ENCODE measurements at regions of chr5 and their contacts with region 1.

Region 1: GRCh38 chr5:109409844-109410388 is at the start of gene PJA2:
- DNase-seq: peak; percentile 89 to 99 (median 96)
- ATAC-seq: peak; percentile 76
- H3K4me3 ChIP-seq: peak within 1 kb of the TSS; percentile 73 to 88
- H3K4me3 Mint-ChIP-seq: peak within 1 kb of the TSS; percentile 98
- H3K27ac ChIP-seq: peak within 1 kb of the TSS; percentile 90 to 98
- H3K27ac Mint-ChIP-seq: peak within 1 kb of the TSS; percentile 97
- H3K4me1 ChIP-seq: peaks cover 19% of the 10 kb centered on the region
- H3K4me1 Mint-ChIP-seq: peaks cover 47% of the 10 kb centered on the region
- H3K27me3 ChIP-seq: no peaks in the 10 kb centered on the region
- H3K27me3 Mint-ChIP-seq: no peaks in the 10 kb centered on the region
- CTCF ChIP-seq: peak; percentile 39
- total RNA-seq, gene PJA2: 89.3 to 94.4 TPM

Region 2: DNA sequence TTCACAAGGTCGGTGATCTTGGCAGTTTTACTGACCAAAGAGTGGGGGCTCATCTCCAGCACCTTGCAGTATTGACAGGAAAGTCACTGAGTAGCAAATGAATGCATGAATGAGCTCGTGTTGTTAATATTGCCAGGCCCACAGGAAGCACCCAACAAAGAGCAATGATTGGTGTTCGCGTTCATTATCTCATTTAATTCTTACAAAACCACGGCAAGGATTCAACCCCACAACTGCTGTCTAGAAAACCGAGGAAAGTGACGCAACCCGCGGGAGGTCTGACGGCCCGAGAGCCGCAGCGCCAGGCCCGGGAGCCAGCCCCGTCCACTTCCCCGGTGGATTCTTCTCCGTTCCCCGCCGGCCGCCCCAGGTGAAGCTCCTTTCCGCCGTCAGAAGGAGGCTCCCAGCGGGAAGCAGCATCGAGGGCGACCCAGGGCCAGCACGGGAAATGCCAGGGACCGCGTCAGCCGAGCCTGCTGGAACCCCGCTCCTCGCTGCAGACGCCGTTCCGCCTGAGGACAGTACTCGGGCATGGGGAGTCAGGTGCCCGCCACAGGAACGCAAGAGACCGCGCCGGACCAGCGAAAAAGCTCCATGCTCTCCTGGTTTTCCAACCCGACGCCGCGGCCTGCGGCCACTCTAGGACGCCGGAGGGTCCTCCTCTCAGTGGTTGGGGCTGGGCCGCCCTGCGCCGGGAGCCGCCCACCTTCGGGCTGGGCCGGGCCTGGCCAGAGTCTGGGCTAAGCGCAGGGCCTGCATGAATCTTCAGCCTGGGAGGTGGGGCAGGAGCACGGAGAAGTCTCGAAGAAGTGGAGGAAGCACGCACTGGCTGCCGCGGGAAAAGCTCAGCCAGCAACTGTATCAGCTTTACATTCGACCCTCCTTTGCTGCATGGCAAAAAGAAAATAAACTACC is 682.0 kb before region 1 on chr5:
- CTCF ChIA-PET with region 1: no interaction called
- POLR2A ChIA-PET with region 1: interaction called, 5 read pairs
- intact Hi-C with region 1: loop called in 1 of 2 experiments (anchors 5 kb)
- DNase-seq: peak in 8 of 9 experiments; percentile 21 to 70 (median 46)
- ATAC-seq: peak; percentile 70
- H3K4me3 ChIP-seq: peak overlapping the region; percentile 85 to 87
- H3K4me3 Mint-ChIP-seq: peak overlapping the region; percentile 90
- H3K27ac ChIP-seq: peak overlapping the region; percentile 52 to 60
- H3K27ac Mint-ChIP-seq: peak overlapping the region; percentile 56
- H3K4me1 ChIP-seq: peaks cover 6% of the 10 kb centered on the region
- H3K4me1 Mint-ChIP-seq: peaks cover 24% of the 10 kb centered on the region
- H3K27me3 ChIP-seq: peaks cover 0 to 3% of the 10 kb centered on the region in 2 experiments
- H3K27me3 Mint-ChIP-seq: peaks cover 21% of the 10 kb centered on the region
- CTCF ChIP-seq: no peak

Region 3: DNA sequence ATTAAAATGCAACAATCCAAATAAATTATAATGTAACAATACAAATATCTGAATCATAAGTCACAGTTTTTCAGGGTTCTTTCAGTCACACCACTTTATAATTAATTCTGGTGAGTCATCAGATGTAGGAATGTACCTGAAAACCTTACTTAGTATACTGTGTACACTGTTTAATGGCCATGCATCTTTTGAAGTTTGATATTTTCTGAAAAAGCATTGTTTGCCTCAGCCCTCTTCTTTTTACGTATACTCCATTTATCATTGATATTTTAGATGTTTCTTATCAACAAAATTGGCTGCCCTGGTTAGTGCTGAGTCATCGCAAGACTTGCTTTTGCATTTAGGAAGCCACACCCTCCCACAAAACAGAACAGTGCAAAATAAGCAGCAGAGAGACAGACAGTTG is 218.8 kb before region 1 on chr5:
- CTCF ChIA-PET with region 1: no interaction called
- POLR2A ChIA-PET with region 1: no interaction called
- intact Hi-C with region 1: no loop called
- DNase-seq: no peak
- ATAC-seq: no peak
- H3K4me3 ChIP-seq: no peak overlapping the region
- H3K4me3 Mint-ChIP-seq: no peak overlapping the region
- H3K27ac ChIP-seq: no peak overlapping the region
- H3K27ac Mint-ChIP-seq: no peak overlapping the region
- H3K4me1 ChIP-seq: no peaks in the 10 kb centered on the region
- H3K4me1 Mint-ChIP-seq: peaks cover 2% of the 10 kb centered on the region
- H3K27me3 ChIP-seq: no peaks in the 10 kb centered on the region
- H3K27me3 Mint-ChIP-seq: no peaks in the 10 kb centered on the region
- CTCF ChIP-seq: no peak

Region 4: DNA sequence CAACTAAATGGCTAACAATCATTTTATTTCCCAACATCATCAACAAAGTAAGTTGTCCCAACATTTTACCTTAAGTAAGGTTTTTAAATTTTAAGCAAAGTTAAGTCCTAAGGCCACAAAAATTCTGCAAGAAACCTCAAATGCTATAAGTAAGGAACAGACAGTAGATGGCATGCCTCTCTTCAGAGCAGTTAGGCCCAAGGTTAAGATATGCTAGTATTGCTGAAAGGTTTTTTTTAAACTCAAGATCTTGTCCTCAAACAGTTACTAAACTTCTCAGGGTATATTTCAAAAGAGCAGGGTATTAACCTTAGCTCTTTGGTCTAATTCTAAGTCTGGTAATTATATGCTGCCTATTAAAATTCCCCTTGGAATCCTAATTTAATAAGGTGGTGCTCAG is 35.3 kb before region 1 on chr5:
- CTCF ChIA-PET with region 1: interaction called, 3 read pairs
- POLR2A ChIA-PET with region 1: interaction called, 11 read pairs
- intact Hi-C with region 1: loop called (anchors 5 kb)
- DNase-seq: peak in 2 of 9 experiments; percentile 26 to 46
- ATAC-seq: peak; percentile 44
- H3K4me3 ChIP-seq: no peak overlapping the region
- H3K4me3 Mint-ChIP-seq: no peak overlapping the region
- H3K27ac ChIP-seq: no peak overlapping the region
- H3K27ac Mint-ChIP-seq: no peak overlapping the region
- H3K4me1 ChIP-seq: peaks cover 6% of the 10 kb centered on the region
- H3K4me1 Mint-ChIP-seq: peaks cover 69% of the 10 kb centered on the region
- H3K27me3 ChIP-seq: no peaks in the 10 kb centered on the region
- H3K27me3 Mint-ChIP-seq: no peaks in the 10 kb centered on the region
- CTCF ChIP-seq: no peak

Region 5: DNA sequence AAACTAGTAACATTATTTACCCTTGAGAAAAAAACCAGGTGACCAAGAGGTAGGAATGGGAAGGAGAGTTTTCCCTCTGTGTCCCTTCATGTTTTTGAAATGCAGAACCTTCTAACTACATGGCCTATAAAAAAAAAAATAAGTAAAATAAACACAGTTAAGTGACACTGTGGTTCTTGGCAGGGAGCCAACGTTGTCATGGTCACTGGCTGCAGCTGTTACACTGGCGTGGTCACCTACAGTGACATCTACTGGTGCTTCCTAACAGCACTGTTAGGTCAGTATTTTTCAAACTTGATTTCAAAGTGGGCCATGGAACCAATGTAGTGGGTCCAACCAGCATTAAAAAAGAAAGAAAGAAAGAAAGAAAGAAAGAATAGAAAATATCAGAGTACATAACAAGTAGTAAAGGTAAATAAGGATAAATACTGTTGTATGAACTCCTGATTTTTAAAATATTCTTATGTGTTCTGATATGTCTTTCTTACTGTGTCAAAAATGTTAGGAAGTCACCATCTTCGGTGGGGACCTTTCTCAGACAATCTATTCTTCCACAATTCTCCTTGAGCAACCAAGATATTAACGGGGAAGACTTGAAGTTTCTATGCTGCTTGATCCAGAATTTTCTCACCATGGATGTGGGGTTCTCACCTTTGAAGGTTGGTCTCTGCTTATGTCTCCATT is 59.0 kb after region 1 on chr5:
- CTCF ChIA-PET with region 1: no interaction called
- POLR2A ChIA-PET with region 1: no interaction called
- intact Hi-C with region 1: loop called in 1 of 2 experiments (anchors 2 kb)
- DNase-seq: peak; percentile 39 to 89 (median 75)
- ATAC-seq: peak; percentile 52
- H3K4me3 ChIP-seq: no peak overlapping the region
- H3K4me3 Mint-ChIP-seq: no peak overlapping the region
- H3K27ac ChIP-seq: no peak overlapping the region
- H3K27ac Mint-ChIP-seq: no peak overlapping the region
- H3K4me1 ChIP-seq: no peaks in the 10 kb centered on the region
- H3K4me1 Mint-ChIP-seq: peaks cover 5% of the 10 kb centered on the region
- H3K27me3 ChIP-seq: no peaks in the 10 kb centered on the region
- H3K27me3 Mint-ChIP-seq: no peaks in the 10 kb centered on the region
- CTCF ChIP-seq: no peak

Region 6: DNA sequence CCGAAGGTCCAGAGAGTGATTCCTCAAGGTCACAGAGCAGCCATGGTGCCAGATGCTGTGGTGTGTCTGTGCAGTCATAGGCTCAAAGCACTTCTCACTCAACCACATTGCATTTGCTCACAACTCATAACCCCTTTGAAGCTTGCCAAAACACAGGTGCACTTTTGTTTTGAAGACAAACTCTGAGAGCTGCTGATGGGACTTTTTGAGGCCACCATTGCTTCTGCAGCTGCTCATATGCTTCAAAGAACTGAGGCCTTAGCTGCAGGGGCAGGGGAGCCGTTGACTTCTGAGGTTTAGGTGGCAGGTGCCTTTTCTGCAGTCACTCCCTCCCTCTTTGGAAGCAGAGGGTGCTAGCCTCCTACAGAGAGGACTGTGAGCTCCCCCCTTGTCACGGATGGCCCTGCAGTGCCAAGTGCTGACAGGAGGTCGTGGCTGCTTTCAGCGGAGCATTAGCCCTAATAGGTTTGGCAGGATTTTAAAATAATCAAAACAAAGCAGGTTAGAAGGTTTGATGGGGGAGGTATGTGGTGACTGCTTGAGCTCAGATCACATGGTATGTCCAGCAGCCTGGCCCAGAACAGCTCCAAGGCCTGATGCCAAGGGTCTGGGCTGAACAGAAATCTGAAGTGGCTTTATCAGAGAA is 511.9 kb after region 1 on chr5:
- CTCF ChIA-PET with region 1: no interaction called
- POLR2A ChIA-PET with region 1: interaction called, 6 read pairs
- intact Hi-C with region 1: loop called in 1 of 2 experiments (anchors 2 kb)
- DNase-seq: peak; percentile 37 to 91 (median 65)
- ATAC-seq: peak; percentile 83
- H3K4me3 ChIP-seq: peak overlapping the region in 1 of 2 experiments; percentile 19
- H3K4me3 Mint-ChIP-seq: peak overlapping the region; percentile 73
- H3K27ac ChIP-seq: peak overlapping the region; percentile 36 to 41
- H3K27ac Mint-ChIP-seq: peak overlapping the region; percentile 93
- H3K4me1 ChIP-seq: peaks cover 43% of the 10 kb centered on the region
- H3K4me1 Mint-ChIP-seq: peaks cover 63% of the 10 kb centered on the region
- H3K27me3 ChIP-seq: no peaks in the 10 kb centered on the region
- H3K27me3 Mint-ChIP-seq: no peaks in the 10 kb centered on the region
- CTCF ChIP-seq: no peak

Region 7: GRCh38 chr5:111092062-111092853 is 1682.3 kb after region 1 on chr5 and contains the start of gene WDR36:
- CTCF ChIA-PET with region 1: no interaction called
- POLR2A ChIA-PET with region 1: no interaction called
- intact Hi-C with region 1: loop called (anchors 2 to 10 kb)
- DNase-seq: peak; percentile 77 to 94 (median 86)
- ATAC-seq: peak; percentile 92
- H3K4me3 ChIP-seq: peak within 1 kb of the TSS; percentile 96
- H3K4me3 Mint-ChIP-seq: peak within 1 kb of the TSS; percentile 95
- H3K27ac ChIP-seq: peak within 1 kb of the TSS; percentile 86 to 89
- H3K27ac Mint-ChIP-seq: peak within 1 kb of the TSS; percentile 94
- H3K4me1 ChIP-seq: peaks cover 24% of the 10 kb centered on the region
- H3K4me1 Mint-ChIP-seq: peaks cover 38% of the 10 kb centered on the region
- H3K27me3 ChIP-seq: no peaks in the 10 kb centered on the region
- H3K27me3 Mint-ChIP-seq: peaks cover 4% of the 10 kb centered on the region
- CTCF ChIP-seq: no peak
- total RNA-seq, gene WDR36: 29.5 to 32.6 TPM

Measured in CD8-positive, alpha-beta T cell (primary cell).